ENCODE measurements at regions of chr17 and their contacts with region 1.

Region 1: DNA sequence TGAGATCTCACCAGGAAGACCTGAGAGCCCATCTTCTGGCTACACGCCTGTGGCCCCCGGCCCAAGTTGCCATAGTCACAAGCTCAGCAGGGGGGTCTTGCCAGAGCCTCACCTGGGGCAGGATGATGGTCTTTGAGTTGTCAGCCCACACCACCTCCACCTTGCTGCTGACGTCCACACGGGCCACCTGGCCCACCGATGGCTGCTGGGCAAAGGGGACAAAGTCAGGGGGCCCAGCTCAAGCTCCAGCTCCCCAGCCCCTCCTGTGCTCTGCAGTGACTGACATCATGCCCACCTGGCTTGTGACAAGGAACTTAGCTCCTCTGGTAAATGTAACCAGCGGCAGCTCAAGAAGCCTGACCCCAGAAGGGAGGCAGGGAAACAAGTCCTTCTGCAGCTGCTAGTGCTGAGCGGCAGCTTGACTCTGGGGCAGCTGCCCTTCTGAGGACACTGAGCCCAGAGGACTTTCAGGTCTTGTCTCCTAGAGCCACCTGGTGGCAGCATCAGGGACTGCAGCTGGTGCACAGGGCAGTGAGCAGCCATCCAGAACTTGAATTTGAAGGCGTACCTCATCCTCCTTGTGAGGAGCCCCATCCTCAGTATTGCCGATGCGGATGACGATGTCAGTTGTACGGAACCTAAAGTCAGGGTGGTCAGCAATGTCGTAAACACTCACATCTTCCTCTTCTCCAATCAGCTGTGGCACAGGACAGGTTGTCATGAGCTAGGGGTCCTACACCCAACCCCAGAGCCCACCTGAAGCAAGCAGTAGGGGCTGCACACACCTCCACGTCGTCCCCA is 13.5 kb downstream of the SPHK1 start:
- DNase-seq: peak; percentile 90
- H3K4me3 Mint-ChIP-seq: no peak overlapping the region
- H3K27ac Mint-ChIP-seq: no peak overlapping the region
- H3K4me1 Mint-ChIP-seq: no peaks in the 10 kb centered on the region
- H3K27me3 Mint-ChIP-seq: no peaks in the 10 kb centered on the region
- CTCF ChIP-seq: peak; percentile 93

Region 2: DNA sequence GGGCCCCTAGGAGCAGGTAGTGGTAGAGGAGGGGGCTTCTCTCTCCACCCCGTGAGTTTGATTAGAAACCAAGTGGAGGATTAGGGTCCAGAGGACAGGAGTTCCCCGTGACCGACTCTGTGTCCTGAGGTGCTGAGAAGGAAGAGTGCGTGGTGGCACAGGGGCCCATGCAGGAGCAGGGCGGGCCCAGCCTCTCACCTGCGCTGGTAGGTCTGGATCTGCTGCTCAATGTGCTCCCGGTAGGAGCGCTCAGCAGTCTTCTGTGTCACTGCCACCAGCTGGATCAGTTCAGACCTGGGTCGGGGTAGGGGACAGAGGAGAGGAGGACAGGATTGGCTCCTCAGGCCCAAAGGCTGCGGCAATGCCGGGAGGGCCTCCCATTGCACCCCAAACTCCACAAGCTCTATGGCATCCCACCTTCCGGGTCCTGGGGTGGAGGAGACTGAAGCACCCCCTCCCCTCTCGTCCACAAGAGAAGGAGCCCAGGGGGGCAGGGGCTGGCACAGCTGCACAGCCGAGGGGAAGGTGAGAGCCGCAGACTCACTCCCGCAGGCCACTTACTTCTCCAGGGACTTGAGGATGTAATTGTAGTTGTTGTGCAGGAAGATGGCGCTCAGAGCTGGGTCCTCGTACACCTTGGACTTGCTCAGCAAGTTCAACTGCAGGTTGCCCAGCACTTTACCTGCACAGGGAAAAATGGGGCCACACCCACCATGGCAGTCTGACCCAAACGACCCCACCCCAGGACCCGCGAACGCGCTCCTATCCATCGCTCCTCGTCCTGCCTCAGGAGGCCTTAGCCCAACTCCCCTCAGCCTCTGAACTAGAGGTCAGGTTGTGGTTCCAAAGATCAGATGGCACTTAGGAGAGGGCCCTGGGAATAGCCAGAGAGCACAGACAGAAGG is 312.5 kb before region 1 on chr17:
- CTCF ChIA-PET with region 1: interaction called, 13 read pairs
- intact Hi-C with region 1: no loop called
- DNase-seq: no peak
- H3K4me3 Mint-ChIP-seq: no peak overlapping the region
- H3K27ac Mint-ChIP-seq: no peak overlapping the region
- H3K4me1 Mint-ChIP-seq: no peaks in the 10 kb centered on the region
- H3K27me3 Mint-ChIP-seq: no peaks in the 10 kb centered on the region
- CTCF ChIP-seq: no peak

Region 3: DNA sequence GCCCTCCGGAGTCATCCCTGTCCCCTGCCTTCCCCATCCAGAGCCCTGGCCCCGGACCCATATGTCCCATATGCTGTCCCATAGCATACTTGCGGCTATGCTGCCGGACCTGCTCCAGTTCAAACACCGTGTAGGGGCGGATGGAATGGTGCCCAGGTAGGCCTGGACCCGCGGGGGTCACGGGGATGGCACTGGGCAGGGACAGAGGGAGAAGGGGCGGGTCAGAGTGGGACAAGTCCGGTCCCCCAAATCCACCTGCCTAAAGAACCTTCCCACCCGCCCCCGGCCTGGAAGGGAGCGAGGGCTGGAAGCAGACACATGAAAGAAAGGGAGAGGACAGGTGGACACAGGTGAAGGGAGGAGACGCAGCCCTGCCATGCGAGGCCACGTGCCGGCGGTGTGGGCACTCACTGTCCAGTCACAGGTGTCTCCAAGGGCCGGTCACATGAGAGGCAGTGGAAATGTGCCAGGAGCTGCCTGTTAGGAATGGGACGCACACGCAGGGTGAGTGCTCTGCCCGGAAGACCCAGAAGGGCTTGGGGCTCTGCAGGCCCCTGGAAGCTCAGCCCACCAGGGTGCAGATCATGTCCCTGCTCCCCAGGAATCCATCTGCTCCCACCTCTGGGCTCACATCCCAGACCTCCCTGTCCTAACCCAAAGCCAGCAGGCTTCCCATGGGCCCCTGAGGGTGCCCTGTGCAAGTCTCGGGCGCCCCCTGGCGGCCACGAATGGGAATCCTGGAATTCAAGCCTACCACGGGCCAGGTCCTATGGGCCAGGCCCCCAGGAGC is 118.7 kb before region 1 on chr17:
- CTCF ChIA-PET with region 1: no interaction called
- intact Hi-C with region 1: no loop called
- DNase-seq: peak; percentile 91
- H3K4me3 Mint-ChIP-seq: no peak overlapping the region
- H3K27ac Mint-ChIP-seq: no peak overlapping the region
- H3K4me1 Mint-ChIP-seq: peaks cover 8% of the 10 kb centered on the region
- H3K27me3 Mint-ChIP-seq: no peaks in the 10 kb centered on the region
- CTCF ChIP-seq: peak; percentile 98

Region 4: GRCh38 chr17:76304226-76305134 is 93.4 kb before region 1 on chr17:
- CTCF ChIA-PET with region 1: interaction called, 8 read pairs
- intact Hi-C with region 1: loop called (anchors 5 kb)
- DNase-seq: no peak
- H3K4me3 Mint-ChIP-seq: no peak overlapping the region
- H3K27ac Mint-ChIP-seq: no peak overlapping the region
- H3K4me1 Mint-ChIP-seq: peaks cover 10% of the 10 kb centered on the region
- H3K27me3 Mint-ChIP-seq: no peaks in the 10 kb centered on the region
- CTCF ChIP-seq: no peak

Region 5: DNA sequence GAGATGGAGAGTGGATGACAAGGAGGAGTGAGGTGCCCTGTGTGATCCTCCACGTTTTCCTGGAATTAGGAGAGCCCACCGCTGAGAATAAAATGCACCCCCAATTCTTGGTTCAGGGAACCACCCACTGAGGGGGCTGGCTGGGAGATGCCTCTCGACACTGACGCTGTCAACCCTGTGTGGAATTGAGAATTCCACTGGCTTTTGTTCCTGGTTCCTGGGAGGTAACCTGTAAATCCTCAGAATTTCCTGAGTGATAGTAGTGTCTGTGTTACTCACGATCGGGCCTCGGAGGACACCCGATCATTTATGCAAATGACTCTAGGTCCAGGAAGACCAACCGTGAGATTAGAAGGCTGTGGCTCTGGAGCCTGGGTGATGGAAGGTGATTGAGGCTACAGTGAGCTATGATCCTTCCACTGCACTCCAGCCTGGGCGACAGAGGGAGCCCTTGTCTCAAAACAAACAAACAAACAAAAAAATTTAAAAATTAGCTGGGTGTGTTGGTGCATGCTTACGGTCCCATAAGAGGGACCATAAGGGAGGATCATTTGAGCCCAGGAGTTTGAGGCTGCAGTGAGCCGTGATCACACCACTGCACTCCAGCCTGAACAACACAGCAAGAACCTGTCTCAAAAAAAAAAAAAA is 32.5 kb before region 1 on chr17:
- CTCF ChIA-PET with region 1: interaction called, 18 read pairs
- intact Hi-C with region 1: no loop called
- DNase-seq: no peak
- H3K4me3 Mint-ChIP-seq: no peak overlapping the region
- H3K27ac Mint-ChIP-seq: no peak overlapping the region
- H3K4me1 Mint-ChIP-seq: peaks cover 6% of the 10 kb centered on the region
- H3K27me3 Mint-ChIP-seq: peaks cover 8% of the 10 kb centered on the region
- CTCF ChIP-seq: peak; percentile 29

Region 6: DNA sequence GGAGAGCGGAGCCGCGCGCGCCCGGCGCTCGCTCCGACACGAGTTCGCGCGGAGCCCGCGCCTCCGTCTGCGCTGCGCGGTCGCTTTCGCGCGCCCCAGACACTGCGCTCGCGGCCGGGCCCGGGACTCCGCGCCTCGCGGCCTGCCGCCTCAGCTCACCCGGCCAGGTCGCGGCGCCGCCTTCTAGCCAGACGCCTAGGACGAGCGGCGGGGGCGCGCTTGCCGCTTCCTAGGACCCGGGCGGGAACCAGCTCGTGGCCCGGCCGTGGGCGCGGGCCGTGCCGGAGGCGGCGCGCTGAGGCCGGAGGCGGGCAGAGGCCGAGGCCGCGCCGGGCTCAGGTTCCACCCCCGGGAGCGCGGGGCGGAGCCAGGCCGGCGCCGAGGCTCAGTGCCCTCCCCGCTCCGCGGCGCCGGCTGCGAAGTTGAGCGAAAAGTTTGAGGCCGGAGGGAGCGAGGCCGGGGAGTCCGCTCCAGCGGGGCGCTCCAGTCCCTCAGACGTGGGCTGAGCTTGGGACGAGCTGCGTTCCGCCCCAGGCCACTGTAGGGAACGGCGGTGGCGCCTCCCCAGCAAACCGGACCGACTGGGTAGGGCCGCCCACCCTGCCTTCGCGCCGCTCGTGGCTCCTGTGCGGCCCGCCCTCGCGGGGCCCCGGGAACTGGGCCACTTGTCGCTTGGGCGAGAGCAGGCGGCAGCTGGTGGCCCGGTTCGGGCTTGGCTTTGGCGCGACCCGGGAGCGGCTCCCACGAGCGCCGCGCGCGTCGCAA is 13.5 kb before region 1 on chr17 and contains the start of gene SPHK1:
- CTCF ChIA-PET with region 1: interaction called, 11 read pairs
- intact Hi-C with region 1: no loop called
- DNase-seq: peak; percentile 78
- H3K4me3 Mint-ChIP-seq: peak within 1 kb of the TSS; percentile 71
- H3K27ac Mint-ChIP-seq: no peak within 1 kb of the TSS
- H3K4me1 Mint-ChIP-seq: no peaks in the 10 kb centered on the region
- H3K27me3 Mint-ChIP-seq: peaks cover 14% of the 10 kb centered on the region
- CTCF ChIP-seq: no peak
- total RNA-seq, gene SPHK1: 1.5 and 1.7 TPM in 2 replicates